HepG2 (cell line): ENCODE measurements at regions of chr6 and their contacts with region 1.

Region 1: DNA sequence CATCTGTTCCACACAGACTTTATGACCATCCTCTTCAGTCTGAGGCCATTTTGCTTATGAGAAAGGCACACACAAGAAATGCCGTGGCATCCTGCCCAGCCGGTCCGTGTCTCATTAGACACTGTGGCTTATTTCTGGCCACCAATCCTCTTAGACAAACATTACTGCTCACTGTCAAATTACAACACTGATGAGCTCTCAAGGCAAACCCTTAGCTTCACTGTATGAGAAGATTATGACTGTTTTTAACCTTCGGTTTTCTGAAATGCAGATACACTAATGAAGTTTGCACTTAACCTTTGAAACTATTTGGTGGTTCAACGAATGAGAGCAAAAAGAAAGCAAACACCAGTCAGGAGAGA is 50.5 kb upstream of the DST start:
- DNase-seq: peak; percentile 75
- ATAC-seq: peak; percentile 84
- H3K4me3 ChIP-seq: peak overlapping the region; percentile 56 to 64 (median 60)
- H3K27ac ChIP-seq: peak overlapping the region; percentile 68
- H3K4me1 ChIP-seq: peaks cover 55% of the 10 kb centered on the region
- H3K27me3 ChIP-seq: no peaks in the 10 kb centered on the region
- CTCF ChIP-seq: no peak
- EP300 ChIP-seq: no peak
- POLR2A ChIP-seq: peak in 1 of 2 experiments; percentile 67; a peak in 2 of 4 replicates
- RAD21 ChIP-seq: no peak

Region 2: GRCh38 chr6:56652994-56653393 is 40.2 kb before region 1 on chr6:
- CTCF ChIA-PET with region 1: no interaction called
- POLR2A ChIA-PET with region 1: interaction called, 11 read pairs
- in situ Hi-C with region 1: no loop called
- intact Hi-C with region 1: no loop called
- DNase-seq: peak; percentile 49
- ATAC-seq: no peak
- H3K4me3 ChIP-seq: no peak overlapping the region
- H3K27ac ChIP-seq: no peak overlapping the region
- H3K4me1 ChIP-seq: peaks cover 60% of the 10 kb centered on the region
- H3K27me3 ChIP-seq: no peaks in the 10 kb centered on the region
- CTCF ChIP-seq: no peak
- EP300 ChIP-seq: no peak; a peak in 1 of 4 replicates
- POLR2A ChIP-seq: no peak
- RAD21 ChIP-seq: no peak